Cardiac septum (tissue), 1 donor: ENCODE measurements at regions of chr2 and their contacts with region 1.

Region 1: DNA sequence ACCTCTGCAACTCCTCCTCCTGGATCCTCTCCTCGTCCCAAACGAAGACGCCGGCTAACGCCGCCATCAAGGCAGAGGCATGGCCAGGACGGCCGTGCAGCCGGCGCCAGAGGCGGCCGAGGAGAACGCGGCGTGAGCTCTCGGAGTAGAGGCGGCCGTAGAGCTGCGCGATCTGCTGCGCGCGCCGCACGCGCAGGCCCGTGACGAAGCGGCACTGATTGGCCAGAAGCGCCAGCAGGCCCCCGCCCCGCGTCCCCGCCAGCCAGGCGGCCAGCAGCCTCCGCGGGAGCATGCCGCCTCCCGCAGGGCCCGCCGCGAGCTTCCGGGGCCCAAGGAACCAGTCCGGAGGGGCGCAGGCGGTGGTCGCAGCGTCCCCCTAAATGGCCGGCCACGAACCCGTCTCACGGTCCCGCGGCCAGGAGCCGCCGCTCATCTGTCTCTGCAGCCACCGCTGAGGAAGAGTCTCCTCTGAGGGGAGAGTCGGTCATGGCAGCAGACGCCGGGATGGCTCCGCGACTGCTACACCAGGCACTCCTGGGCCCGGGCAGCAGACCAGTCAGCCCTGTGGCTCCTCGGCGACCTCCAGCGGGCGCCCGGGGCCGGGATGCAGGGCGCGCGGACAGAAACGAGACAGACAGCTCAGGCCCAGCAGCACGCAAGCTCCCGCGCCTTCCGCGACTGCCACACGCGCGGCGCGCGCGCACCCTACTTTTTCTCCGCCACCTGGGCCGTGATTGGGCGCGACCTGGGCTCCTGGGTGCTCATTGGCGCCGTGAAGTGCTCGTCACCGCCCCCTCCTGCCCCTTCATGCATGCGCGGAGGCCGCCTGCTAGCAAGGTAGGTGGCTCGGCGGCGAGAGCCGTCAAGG is at the start of gene STARD7:
- DNase-seq: peak; percentile 99
- total RNA-seq, gene STARD7: 142 TPM

Region 2: DNA sequence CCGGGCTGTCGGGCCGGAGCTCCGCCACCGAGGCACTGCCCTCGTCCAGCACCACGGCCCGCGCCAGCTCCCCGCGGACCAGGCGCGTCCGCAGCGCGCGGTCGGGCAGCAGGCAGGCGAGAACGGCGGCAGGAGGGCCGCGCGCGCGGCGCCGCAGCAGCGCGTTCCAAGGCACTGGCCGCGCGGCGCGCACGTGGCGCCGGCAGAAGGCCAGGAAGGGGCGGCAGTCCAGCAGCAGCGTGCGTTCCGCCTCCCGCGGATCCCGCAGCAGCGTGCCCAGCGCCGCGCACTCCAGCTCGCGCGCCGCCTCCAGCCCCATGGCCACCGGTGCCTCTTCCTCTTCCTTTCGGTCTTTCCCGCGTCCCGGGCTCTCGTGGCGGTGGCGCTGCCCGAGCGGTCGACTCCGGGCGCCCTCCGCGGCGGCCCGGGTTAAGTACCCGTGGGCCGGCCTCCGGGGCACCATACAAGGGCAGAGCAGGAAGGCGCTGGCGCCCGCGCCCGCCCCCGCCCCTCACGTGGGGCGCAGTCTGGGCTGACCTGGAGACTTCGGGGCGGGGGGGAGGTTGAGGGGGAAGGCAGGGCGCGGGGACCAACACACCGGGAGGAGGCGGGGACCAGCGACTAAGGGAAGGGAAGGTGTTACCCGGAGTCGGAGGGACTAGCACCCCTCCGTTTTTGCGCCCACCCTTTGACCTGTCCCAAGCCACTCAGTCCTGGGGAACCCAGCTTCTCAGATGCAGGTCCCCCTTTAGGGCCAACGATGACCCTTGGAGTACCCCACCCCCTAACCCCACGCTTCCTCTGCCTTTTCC is 63.1 kb before region 1 on chr2 and contains the start of gene DUSP2:
- intact Hi-C with region 1: loop called (anchors 2 kb)
- DNase-seq: peak; percentile 88
- total RNA-seq, gene DUSP2: 1.3 TPM

Region 3: DNA sequence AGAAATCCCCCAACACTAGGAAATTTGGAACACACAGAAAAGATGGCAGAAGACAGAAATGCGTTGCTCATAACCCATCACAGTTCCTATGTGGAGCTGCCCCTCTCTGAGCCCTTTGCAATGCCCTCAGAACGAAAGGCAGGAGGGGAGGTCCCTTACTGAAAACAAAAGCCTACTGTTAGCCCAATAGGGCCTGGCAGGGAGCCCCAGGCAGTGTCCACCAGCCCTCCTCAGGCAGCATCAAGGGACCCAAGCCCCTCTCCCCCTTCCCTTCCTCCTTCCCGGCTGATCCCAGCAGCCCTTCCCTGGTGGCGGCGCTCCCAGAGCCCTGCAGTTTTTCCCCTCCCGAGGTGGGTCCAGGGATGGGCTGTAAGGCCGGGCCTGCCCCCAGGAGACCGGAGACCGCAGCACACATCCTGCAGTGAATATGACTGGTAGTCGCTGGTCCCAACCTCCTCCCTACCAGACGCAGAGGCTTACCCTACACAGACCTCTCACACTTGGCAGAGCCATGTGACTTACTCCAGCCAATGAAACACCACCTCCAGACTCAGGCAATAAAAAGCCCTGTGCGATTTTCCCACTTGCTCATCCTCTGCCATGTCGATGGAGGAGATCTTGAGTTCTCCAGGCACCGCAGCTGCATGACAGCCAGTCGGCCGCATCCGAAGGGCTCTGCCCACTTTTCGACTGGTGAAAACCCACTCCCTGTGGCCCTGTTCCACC is 43.8 kb before region 1 on chr2:
- intact Hi-C with region 1: no loop called
- DNase-seq: peak; percentile 54